A549 (cell line): ENCODE measurements at regions of chr1 and their contacts with region 1.

Region 1: GRCh38 chr1:207404849-207405525 is 49.1 kb upstream of the CR2 start:
- DNase-seq: peak; percentile 68 to 77
- ATAC-seq: peak; percentile 92 to 93
- H3K4me3 ChIP-seq: no peak overlapping the region
- H3K27ac ChIP-seq: no peak overlapping the region
- H3K4me1 ChIP-seq: no peaks in the 10 kb centered on the region; the same call in 2 of the 3 replicates
- CTCF ChIP-seq: peak; percentile 94
- EP300 ChIP-seq: no peak
- POLR2A ChIP-seq: no peak
- RAD21 ChIP-seq: peak; percentile 90 to 92

Region 2: GRCh38 chr1:207077470-207078377 is 327.3 kb before region 1 on chr1:
- CTCF ChIA-PET with region 1: interaction called, 94 read pairs
- POLR2A ChIA-PET with region 1: no interaction called
- DNase-seq: peak; percentile 62 to 78
- ATAC-seq: peak; percentile 67 to 93; a peak in 5 of 6 replicates
- H3K4me3 ChIP-seq: no peak overlapping the region
- H3K27ac ChIP-seq: peak overlapping the region; percentile 12 to 29; a peak in 1 of 6 replicates
- H3K4me1 ChIP-seq: peaks cover 28% of the 10 kb centered on the region
- CTCF ChIP-seq: peak; percentile 96
- EP300 ChIP-seq: no peak
- POLR2A ChIP-seq: no peak
- RAD21 ChIP-seq: peak; percentile 90 to 98

Region 3: DNA sequence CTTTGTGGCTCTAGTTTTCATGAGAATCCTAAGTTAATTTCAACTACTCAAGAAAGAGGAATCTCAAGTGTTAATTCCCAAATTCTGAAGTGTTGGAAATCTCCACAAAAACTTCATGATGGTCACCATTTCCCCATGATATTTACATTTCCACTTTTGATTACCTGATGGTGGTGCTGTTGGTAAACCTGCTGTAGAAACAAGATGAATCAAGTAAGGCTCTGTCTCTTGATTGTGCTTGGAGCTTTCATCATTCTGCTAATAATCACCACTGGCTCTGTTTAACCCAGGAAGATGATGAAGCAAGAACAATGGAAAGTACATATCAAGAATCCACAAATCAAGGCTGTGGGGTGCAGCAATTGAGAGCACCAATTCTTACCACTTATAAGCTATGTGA is 223.1 kb before region 1 on chr1:
- CTCF ChIA-PET with region 1: interaction called, 10 read pairs
- POLR2A ChIA-PET with region 1: no interaction called
- DNase-seq: peak in 1 of 2 experiments; percentile 20
- ATAC-seq: no peak
- H3K4me3 ChIP-seq: no peak overlapping the region
- H3K27ac ChIP-seq: no peak overlapping the region
- H3K4me1 ChIP-seq: no peaks in the 10 kb centered on the region
- CTCF ChIP-seq: peak; percentile 22; the same call in 2 of the 3 replicates
- EP300 ChIP-seq: no peak
- POLR2A ChIP-seq: no peak
- RAD21 ChIP-seq: peak; percentile 49 to 62; a peak in 4 of 5 replicates

Region 4: GRCh38 chr1:207321079-207321789 is 83.8 kb before region 1 on chr1 and contains the start of gene CD55:
- CTCF ChIA-PET with region 1: interaction called, 22 read pairs
- POLR2A ChIA-PET with region 1: interaction called, 15 read pairs
- DNase-seq: peak; percentile 92 to 99
- ATAC-seq: peak; percentile 96 to 97
- H3K4me3 ChIP-seq: peak within 1 kb of the TSS; percentile 56
- H3K27ac ChIP-seq: peak within 1 kb of the TSS; percentile 84 to 96
- H3K4me1 ChIP-seq: peaks cover 29% of the 10 kb centered on the region
- CTCF ChIP-seq: peak; percentile 37; the same call in 2 of the 3 replicates
- EP300 ChIP-seq: no peak; a peak in 2 of 5 replicates
- POLR2A ChIP-seq: peak; percentile 65
- RAD21 ChIP-seq: peak; percentile 30 to 41; a peak in 4 of 5 replicates
- polyA plus RNA-seq, gene CD55: 173 and 180 TPM in 2 replicates

Region 5: GRCh38 chr1:207393610-207394009 is 11.4 kb before region 1 on chr1:
- CTCF ChIA-PET with region 1: interaction called, 19 read pairs
- POLR2A ChIA-PET with region 1: no interaction called
- DNase-seq: peak in 1 of 2 experiments; percentile 71
- ATAC-seq: peak; percentile 45 to 67; a peak in 4 of 6 replicates
- H3K4me3 ChIP-seq: no peak overlapping the region
- H3K27ac ChIP-seq: peak overlapping the region in 1 of 2 experiments; percentile 34; a peak in 2 of 6 replicates
- H3K4me1 ChIP-seq: peaks cover 13% of the 10 kb centered on the region; the same call in 2 of the 3 replicates
- CTCF ChIP-seq: no peak
- EP300 ChIP-seq: no peak
- POLR2A ChIP-seq: no peak
- RAD21 ChIP-seq: no peak

Region 6: DNA sequence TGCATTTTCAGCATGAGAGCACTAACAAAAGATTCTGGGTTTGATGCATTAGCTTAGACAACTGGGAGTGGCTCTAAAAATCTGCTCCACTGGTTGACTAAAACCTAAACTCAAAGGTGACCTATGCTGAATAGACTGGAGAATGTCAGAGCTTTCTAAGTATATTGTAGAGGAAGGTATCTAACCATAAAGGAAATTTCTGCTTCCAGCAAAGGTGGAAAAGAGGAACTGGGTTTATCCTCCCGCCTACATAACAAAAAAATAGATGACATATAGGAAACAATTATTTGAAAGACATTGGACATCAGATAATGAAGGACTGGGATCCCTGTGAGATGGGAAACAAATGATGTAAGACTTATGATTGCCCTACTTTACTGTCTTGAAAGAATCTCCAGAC is 13.4 kb after region 1 on chr1:
- CTCF ChIA-PET with region 1: interaction called, 21 read pairs
- POLR2A ChIA-PET with region 1: no interaction called
- DNase-seq: no peak
- ATAC-seq: no peak
- H3K4me3 ChIP-seq: no peak overlapping the region
- H3K27ac ChIP-seq: no peak overlapping the region
- H3K4me1 ChIP-seq: no peaks in the 10 kb centered on the region
- CTCF ChIP-seq: no peak
- EP300 ChIP-seq: no peak
- POLR2A ChIP-seq: no peak
- RAD21 ChIP-seq: no peak

Region 7: DNA sequence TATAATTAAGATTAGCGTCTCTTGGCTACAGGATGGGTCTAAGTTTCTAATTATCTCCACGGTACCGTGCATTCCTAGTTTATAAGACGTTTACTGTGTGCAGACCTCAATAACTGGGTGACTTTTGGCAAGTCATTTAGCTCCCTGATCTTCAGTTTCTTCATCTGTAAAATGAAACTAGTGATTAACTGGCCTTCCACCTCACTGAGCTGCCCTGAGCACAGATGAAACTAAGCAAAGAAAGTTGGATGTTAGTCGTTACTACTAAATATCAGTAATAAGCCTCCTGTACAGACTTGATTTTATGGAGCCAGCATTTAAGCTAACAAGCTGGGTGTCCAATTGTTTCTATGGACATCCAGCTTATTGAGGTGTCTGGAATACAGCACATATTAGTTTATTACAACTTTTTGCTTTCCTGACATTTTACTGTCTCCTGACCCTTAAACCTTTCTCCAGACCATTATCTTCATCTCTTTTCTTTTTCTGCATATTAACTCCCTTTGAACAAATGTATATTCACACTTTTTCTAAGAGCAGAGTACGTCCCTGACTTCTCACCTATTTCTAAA is 50.3 kb after region 1 on chr1:
- CTCF ChIA-PET with region 1: no interaction called
- POLR2A ChIA-PET with region 1: no interaction called
- DNase-seq: no peak
- ATAC-seq: no peak
- H3K4me3 ChIP-seq: no peak overlapping the region; the same call in 2 of the 3 replicates
- H3K27ac ChIP-seq: no peak overlapping the region
- H3K4me1 ChIP-seq: peaks cover 5% of the 10 kb centered on the region; the same call in 1 of the 3 replicates
- CTCF ChIP-seq: no peak
- EP300 ChIP-seq: no peak
- POLR2A ChIP-seq: no peak
- RAD21 ChIP-seq: no peak